GM12878 (cell line): ENCODE measurements at regions of chr4 and their contacts with region 1.

Region 1: GRCh38 chr4:104860238-104861123 is 286.2 kb upstream of the TET2 start:
- DNase-seq: peak; percentile 72
- ATAC-seq: peak; percentile 94
- H3K4me3 ChIP-seq: no peak overlapping the region
- H3K27ac ChIP-seq: no peak overlapping the region
- H3K4me1 ChIP-seq: no peaks in the 10 kb centered on the region
- H3K27me3 ChIP-seq: no peaks in the 10 kb centered on the region
- CTCF ChIP-seq: peak; percentile 74 to 96 (median 90); a peak in 5 of 6 replicates
- EP300 ChIP-seq: no peak
- POLR2A ChIP-seq: no peak
- RAD21 ChIP-seq: peak; percentile 100

Region 2: DNA sequence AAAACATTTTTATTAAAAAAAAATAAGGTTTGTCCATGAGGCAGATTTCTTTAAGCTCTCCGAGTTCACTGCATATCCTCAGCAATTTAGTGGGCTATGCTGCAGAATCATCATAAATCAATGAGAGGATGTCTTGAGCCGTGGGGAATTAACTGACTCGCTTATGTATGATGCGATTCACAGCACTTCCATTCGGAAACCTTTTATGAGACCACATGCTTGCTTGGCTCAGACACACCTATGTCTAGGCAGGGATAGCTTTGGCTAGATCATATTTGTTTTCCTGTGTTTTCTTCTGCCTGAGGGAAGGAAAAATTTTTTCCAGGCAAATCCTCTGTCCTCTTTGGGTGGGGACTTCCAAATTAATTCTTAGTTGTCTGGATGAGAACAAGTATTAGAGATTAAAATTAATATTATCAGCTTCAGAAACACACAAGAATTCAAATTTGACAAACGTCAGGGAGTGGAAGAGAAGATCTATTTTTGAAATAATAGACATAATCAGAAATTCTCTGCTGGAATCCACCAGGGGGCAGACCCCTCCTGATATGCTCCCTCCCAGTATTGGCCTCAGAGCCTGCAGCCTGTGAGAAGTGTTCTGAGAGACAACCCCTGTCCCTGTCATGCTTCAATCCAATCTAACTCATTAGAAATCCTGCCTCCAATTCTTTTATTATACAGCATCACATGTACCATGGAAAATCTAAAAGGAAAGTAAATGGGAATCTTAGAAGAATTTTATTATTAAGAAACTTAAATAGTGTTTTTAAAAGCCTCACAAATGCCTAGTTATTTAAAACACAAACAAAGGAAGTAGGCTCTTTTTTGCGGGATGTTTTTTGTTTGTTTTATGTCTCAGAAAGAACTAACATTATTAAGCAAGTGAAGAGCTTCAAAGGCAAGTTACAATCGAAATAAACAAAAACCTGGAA is 795.6 kb before region 1 on chr4:
- CTCF ChIA-PET with region 1: interaction called, 38 read pairs
- POLR2A ChIA-PET with region 1: no interaction called
- RAD21 ChIA-PET with region 1: interaction called, 8 read pairs
- SMC1A ChIA-PET with region 1: interaction called, 3 read pairs
- in situ Hi-C with region 1: loop called (anchors 5 kb)
- intact Hi-C with region 1: loop called (anchors 1 kb)
- DNase-seq: peak; percentile 23
- ATAC-seq: peak; percentile 97
- H3K4me3 ChIP-seq: no peak overlapping the region
- H3K27ac ChIP-seq: no peak overlapping the region
- H3K4me1 ChIP-seq: no peaks in the 10 kb centered on the region
- H3K27me3 ChIP-seq: no peaks in the 10 kb centered on the region
- CTCF ChIP-seq: peak; percentile 56 to 74 (median 58); a peak in 5 of 6 replicates
- EP300 ChIP-seq: no peak
- POLR2A ChIP-seq: no peak
- RAD21 ChIP-seq: peak; percentile 88

Region 3: DNA sequence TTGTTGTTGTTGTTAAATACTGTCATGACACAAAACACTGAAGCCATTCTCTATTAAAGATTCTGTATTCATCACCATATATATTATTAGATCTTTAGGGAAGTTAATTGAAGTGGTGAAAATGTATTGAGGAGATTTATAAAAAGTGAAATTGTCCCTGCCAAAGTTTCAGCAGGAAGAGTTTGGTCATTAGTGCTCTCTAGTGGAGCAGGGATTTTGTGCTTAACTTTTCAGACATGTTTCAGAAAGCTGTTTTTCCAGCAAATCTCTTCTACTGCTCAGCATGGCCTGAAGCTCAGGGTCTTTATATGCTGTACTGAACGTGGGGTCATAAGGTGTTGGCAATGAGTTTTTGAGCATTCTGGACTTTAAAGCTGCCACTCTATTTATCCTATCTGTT is 329.1 kb before region 1 on chr4:
- CTCF ChIA-PET with region 1: interaction called, 5 read pairs
- POLR2A ChIA-PET with region 1: no interaction called
- RAD21 ChIA-PET with region 1: interaction called, 3 read pairs
- SMC1A ChIA-PET with region 1: interaction called, 4 read pairs
- in situ Hi-C with region 1: no loop called
- intact Hi-C with region 1: loop called (anchors 5 kb)
- DNase-seq: no peak
- ATAC-seq: 0 out of 3 replicates have a peak, but pooled peaks have one; percentile 27
- H3K4me3 ChIP-seq: no peak overlapping the region
- H3K27ac ChIP-seq: no peak overlapping the region
- H3K4me1 ChIP-seq: no peaks in the 10 kb centered on the region
- H3K27me3 ChIP-seq: no peaks in the 10 kb centered on the region
- CTCF ChIP-seq: peak; percentile 10 to 41 (median 16); a peak in 3 of 6 replicates
- EP300 ChIP-seq: no peak
- POLR2A ChIP-seq: no peak
- RAD21 ChIP-seq: peak; percentile 55

Region 4: GRCh38 chr4:104616401-104616820 is 244.1 kb before region 1 on chr4:
- CTCF ChIA-PET with region 1: no interaction called
- POLR2A ChIA-PET with region 1: no interaction called
- RAD21 ChIA-PET with region 1: no interaction called
- SMC1A ChIA-PET with region 1: no interaction called
- in situ Hi-C with region 1: no loop called
- intact Hi-C with region 1: loop called (anchors 10 kb)
- DNase-seq: no peak
- ATAC-seq: no peak
- H3K4me3 ChIP-seq: no peak overlapping the region
- H3K27ac ChIP-seq: no peak overlapping the region
- H3K4me1 ChIP-seq: no peaks in the 10 kb centered on the region
- H3K27me3 ChIP-seq: no peaks in the 10 kb centered on the region
- CTCF ChIP-seq: no peak
- EP300 ChIP-seq: no peak
- POLR2A ChIP-seq: no peak
- RAD21 ChIP-seq: no peak

Region 5: DNA sequence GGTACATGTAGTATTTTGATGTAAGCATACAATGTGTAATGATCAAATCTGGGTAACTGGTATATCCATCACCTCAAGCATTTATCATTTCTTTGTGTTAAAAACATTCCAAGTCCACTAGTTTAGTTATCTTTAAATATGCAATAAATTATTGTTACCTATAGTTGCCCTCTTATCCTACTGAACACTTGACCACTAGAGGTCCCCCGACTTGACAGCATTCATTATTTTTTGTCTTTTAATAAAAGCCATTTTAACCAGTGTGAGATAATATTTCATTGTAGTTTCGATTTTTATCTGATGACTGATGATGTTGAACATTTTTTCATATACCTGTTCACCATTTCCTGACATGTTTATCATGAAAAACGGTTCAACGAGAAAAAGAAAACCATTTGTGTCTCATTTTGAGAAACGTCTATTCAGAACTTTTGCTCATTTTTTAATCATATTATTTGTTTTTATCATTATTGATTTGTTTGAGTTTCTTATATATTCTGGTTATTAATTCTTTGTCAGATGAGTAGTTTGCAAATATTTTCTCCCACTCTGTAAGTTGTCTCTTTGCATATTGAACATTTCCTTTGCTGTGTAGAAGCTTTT is 166.8 kb before region 1 on chr4:
- CTCF ChIA-PET with region 1: interaction called, 48 read pairs
- POLR2A ChIA-PET with region 1: no interaction called
- RAD21 ChIA-PET with region 1: interaction called, 17 read pairs
- SMC1A ChIA-PET with region 1: interaction called, 35 read pairs
- in situ Hi-C with region 1: no loop called
- intact Hi-C with region 1: loop called (anchors 5 kb)
- DNase-seq: no peak
- ATAC-seq: peak; percentile 51; the same call in 2 of the 3 replicates
- H3K4me3 ChIP-seq: no peak overlapping the region
- H3K27ac ChIP-seq: no peak overlapping the region
- H3K4me1 ChIP-seq: no peaks in the 10 kb centered on the region
- H3K27me3 ChIP-seq: no peaks in the 10 kb centered on the region
- CTCF ChIP-seq: peak; percentile 5 to 29 (median 25); a peak in 2 of 6 replicates
- EP300 ChIP-seq: no peak
- POLR2A ChIP-seq: no peak
- RAD21 ChIP-seq: no peak

Region 6: DNA sequence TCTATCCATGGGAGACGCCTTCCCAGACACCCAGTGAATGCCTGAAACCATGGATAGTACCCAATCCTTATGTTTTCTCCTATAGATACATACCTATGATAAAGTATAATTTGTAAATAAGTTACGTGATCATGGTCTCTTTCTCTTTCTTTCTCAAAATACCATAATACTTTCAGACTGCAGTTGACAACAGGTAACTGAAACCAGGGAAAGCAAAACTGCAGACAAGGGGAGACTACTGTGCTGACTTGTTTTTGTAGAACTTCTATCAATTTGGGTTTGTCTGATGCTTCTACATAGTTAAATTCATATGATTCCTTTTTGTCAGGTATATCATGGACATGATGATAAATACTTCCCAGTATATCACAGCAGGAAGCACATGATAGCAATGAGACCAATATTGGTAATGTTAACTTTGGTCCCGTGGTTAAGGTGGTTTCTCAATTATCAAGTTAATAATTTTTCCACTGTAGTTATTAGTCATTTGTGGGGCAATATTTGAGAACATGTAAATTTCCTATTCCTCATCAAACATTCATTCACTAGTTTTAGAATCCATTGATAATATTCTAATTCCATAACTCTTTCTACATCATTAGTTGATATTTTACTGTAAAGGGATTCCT is 11.8 kb before region 1 on chr4:
- CTCF ChIA-PET with region 1: interaction called, 22 read pairs
- POLR2A ChIA-PET with region 1: interaction called, 4 read pairs
- RAD21 ChIA-PET with region 1: interaction called, 3 read pairs
- SMC1A ChIA-PET with region 1: interaction called, 9 read pairs
- in situ Hi-C with region 1: no loop called
- intact Hi-C with region 1: no loop called
- DNase-seq: no peak
- ATAC-seq: no peak; the same call in 2 of the 3 replicates
- H3K4me3 ChIP-seq: no peak overlapping the region
- H3K27ac ChIP-seq: no peak overlapping the region
- H3K4me1 ChIP-seq: no peaks in the 10 kb centered on the region
- H3K27me3 ChIP-seq: no peaks in the 10 kb centered on the region
- CTCF ChIP-seq: no peak
- EP300 ChIP-seq: no peak
- POLR2A ChIP-seq: no peak
- RAD21 ChIP-seq: no peak

Region 7: DNA sequence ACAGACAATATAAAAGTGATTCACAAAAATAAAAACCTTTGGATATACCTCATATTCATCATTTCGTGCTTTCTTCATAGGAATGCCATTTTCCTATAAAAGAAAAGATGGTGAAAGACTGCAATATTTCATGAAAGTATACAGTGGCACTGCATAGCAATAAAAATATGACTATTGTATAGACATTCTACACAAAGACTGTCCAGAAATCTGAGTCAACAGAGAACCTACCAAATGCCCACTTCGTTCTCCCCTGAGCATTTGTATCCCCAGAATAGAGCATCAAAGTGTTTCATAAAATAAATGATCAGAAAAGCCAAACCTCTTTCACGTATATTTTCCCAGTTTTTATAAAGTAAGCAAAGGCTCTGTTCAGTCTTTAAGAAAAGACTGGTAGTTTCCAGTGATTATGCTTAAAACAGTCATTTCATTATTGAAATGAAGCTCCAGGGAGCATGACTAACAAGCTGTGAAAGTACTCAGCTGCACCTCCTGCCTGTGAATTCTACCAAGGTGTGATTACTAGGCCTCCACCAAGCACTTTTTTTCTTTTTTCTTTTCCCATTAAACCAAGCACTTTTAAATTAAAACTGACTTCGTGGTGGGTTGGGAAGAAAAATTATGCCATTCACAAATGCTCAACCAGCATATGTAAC is 593.2 kb after region 1 on chr4:
- CTCF ChIA-PET with region 1: no interaction called
- POLR2A ChIA-PET with region 1: no interaction called
- RAD21 ChIA-PET with region 1: no interaction called
- SMC1A ChIA-PET with region 1: no interaction called
- in situ Hi-C with region 1: no loop called
- intact Hi-C with region 1: no loop called
- DNase-seq: no peak
- ATAC-seq: peak; percentile 95
- H3K4me3 ChIP-seq: no peak overlapping the region
- H3K27ac ChIP-seq: no peak overlapping the region; the same call in 1 of the 2 replicates
- H3K4me1 ChIP-seq: no peaks in the 10 kb centered on the region
- H3K27me3 ChIP-seq: no peaks in the 10 kb centered on the region
- CTCF ChIP-seq: peak in 2 of 3 experiments; percentile 9 to 39; a peak in 2 of 6 replicates
- EP300 ChIP-seq: peak; percentile 66 to 72; a peak in 2 of 4 replicates
- POLR2A ChIP-seq: no peak
- RAD21 ChIP-seq: 0 out of 2 replicates have a peak, but pooled peaks have one; percentile 22